ENCODE measurements at regions of chr11 and their contacts with region 1.

Region 1: GRCh38 chr11:2151500-2152257 is 9.3 kb downstream of the INS start:
- DNase-seq: peak; percentile 90 to 92
- H3K4me3 ChIP-seq: no peak overlapping the region
- H3K4me3 Mint-ChIP-seq: peak overlapping the region; percentile 33
- H3K27ac Mint-ChIP-seq: peak overlapping the region; percentile 65
- H3K4me1 ChIP-seq: no peaks in the 10 kb centered on the region; the same call in 1 of the 2 replicates
- H3K4me1 Mint-ChIP-seq: no peaks in the 10 kb centered on the region
- H3K27me3 ChIP-seq: no peaks in the 10 kb centered on the region
- H3K27me3 Mint-ChIP-seq: no peaks in the 10 kb centered on the region
- CTCF ChIP-seq: peak; percentile 93 to 97

Region 2: DNA sequence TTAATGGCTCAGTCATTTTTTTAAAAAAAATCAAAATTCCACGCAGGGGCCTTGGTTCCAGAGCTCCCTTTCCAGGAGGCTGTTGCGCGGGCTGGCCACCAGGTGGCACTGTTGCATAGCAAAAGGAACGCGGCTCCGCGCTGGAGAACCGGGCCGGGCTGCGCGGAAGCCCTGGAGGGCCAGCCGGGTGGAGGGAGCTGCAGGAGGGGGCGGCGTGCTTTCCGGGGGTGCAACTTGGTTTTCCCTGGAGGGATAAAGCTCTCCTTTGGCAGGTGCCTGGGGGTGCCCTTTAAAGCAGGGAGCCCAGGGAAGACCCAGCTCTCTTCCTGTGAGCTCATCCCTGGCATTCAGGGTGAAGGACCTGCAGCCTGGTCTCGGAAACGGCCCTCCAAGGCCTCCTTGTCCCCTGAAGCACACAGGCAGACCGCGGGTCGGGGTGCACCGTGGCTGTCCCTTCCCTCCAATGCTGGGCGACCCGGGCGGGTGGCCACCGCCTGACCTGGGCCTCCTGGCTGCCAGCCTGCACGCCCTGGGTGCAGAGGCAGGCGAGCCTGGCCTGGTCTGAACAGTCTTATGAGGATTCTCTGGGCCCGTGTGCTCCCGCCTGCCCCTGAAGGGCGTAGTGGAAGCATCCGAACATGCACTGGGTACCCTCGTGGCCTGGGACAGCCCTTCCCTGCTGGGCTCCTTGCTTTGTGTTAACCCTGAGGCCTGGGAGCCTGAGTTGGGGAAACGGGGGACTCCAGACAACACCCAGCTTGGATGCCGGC is 498.7 kb before region 1 on chr11:
- CTCF ChIA-PET with region 1: interaction called, 188 read pairs
- POLR2A ChIA-PET with region 1: no interaction called
- intact Hi-C with region 1: loop called (anchors 1 kb)
- DNase-seq: peak; percentile 74 to 91
- H3K4me3 ChIP-seq: no peak overlapping the region
- H3K4me3 Mint-ChIP-seq: no peak overlapping the region
- H3K27ac Mint-ChIP-seq: peak overlapping the region; percentile 42
- H3K4me1 ChIP-seq: peaks cover 37% of the 10 kb centered on the region
- H3K4me1 Mint-ChIP-seq: peaks cover 17% of the 10 kb centered on the region
- H3K27me3 ChIP-seq: no peaks in the 10 kb centered on the region
- H3K27me3 Mint-ChIP-seq: no peaks in the 10 kb centered on the region
- CTCF ChIP-seq: peak; percentile 93 to 97

Region 3: DNA sequence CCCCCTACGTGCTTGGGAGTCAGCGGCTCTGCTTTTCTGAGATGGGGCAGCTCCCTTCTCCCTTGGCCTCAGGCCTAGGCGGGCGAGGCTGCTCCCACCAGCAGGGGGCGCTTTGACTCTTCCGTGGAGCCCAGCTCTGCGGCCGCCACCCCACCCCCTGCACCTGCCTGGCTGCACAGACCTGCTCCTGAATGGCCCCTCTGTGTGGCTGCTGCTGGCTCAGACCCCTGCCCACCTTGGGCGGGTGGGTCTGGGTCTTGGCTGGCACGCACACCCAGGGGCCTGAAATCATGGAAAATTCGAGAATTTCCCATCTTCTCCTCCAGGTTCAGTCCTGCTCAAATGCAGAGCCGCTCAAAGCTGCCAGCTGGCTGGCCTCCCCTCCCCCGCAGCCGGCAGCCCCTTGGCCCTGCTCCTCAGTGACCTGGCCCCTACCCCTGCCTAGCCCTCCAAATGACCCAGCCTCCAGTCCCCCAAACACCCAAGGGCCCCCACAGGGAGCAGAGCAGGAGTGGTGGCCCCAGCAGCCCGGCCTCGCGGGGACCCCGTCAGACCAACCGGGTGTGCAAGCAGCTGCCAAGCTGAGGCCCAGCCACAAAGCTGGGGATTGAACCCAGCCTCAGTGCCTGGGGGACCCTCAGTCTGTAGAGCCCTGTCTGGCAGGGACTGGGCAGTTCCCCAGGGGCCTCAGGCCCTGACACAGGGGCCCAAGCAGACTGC is 269.0 kb before region 1 on chr11:
- CTCF ChIA-PET with region 1: interaction called, 140 read pairs
- POLR2A ChIA-PET with region 1: interaction called, 3 read pairs
- intact Hi-C with region 1: loop called (anchors 1 kb)
- DNase-seq: peak; percentile 76 to 87
- H3K4me3 ChIP-seq: no peak overlapping the region
- H3K4me3 Mint-ChIP-seq: no peak overlapping the region
- H3K27ac Mint-ChIP-seq: no peak overlapping the region
- H3K4me1 ChIP-seq: peaks cover 8% of the 10 kb centered on the region
- H3K4me1 Mint-ChIP-seq: no peaks in the 10 kb centered on the region
- H3K27me3 ChIP-seq: no peaks in the 10 kb centered on the region
- H3K27me3 Mint-ChIP-seq: no peaks in the 10 kb centered on the region
- CTCF ChIP-seq: peak; percentile 89 to 95

Region 4: DNA sequence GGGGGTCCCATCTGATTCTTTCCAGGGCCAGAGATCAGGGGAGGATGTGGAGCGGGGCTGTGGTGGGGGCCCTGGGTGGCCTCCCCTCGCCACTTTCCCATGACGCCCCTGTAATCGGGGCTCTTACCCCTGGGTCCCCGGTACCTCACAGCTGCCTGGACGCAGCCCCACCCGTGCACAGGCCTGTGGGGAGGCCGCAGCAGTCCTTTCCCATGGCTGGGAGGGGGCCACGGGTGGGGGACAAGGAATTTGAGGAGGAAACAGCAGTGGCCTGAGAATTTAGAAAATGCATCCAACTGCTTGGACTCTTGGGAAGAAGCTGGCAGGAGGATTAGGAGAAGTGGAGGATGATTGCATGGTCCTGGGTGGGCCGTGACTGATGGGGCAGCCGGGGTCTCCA is 172.1 kb before region 1 on chr11:
- CTCF ChIA-PET with region 1: interaction called, 13 read pairs
- POLR2A ChIA-PET with region 1: no interaction called
- intact Hi-C with region 1: no loop called
- DNase-seq: no peak
- H3K4me3 ChIP-seq: no peak overlapping the region
- H3K4me3 Mint-ChIP-seq: no peak overlapping the region
- H3K27ac Mint-ChIP-seq: no peak overlapping the region
- H3K4me1 ChIP-seq: no peaks in the 10 kb centered on the region
- H3K4me1 Mint-ChIP-seq: no peaks in the 10 kb centered on the region
- H3K27me3 ChIP-seq: no peaks in the 10 kb centered on the region
- H3K27me3 Mint-ChIP-seq: no peaks in the 10 kb centered on the region
- CTCF ChIP-seq: no peak

Region 5: DNA sequence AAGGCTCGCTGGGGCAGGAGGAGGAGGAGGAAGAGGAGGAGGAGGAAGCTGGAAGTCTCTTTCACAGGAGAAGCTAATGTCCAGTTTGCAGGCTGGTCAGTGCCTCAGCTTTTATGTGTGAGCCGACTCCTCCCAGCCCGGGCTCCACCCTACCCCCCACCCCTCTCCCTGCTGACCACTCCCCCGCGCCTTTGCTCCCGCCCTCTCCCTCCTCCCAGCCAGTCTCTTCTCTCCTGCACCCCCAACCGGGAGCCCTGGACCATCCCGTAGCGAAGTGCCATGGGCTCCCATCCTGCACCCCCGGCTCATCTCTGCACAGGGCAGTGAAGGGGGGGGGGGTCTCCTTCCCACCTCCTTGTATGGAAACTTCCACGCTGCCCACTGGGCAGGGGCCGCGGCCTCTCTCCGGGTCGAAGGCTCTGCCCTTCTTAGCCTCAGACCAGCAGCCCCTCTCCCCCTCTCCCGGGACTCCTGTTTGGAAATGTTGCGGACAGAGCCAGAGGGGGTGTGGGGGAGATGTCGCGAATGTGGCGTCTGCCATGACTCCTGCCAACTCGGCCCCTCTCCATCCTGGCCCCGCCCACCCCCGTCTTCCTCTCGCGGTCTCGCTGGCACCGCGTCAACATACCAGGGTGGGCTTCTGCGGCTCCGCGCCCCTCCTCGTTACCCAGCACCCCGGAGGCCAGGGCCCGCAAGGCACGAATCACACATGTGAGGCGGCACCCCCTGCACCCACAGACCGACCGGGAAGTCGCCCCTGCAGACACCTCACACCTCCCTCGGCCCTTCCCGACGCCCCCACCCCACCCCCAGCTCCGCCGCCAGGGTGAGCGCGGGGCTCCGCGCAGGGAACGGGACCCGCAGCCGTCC is 14.2 kb before region 1 on chr11:
- CTCF ChIA-PET with region 1: interaction called, 28 read pairs
- POLR2A ChIA-PET with region 1: interaction called, 5 read pairs
- intact Hi-C with region 1: no loop called
- DNase-seq: peak; percentile 91 to 94
- H3K4me3 ChIP-seq: peak overlapping the region; percentile 78
- H3K4me3 Mint-ChIP-seq: peak overlapping the region; percentile 84
- H3K27ac Mint-ChIP-seq: peak overlapping the region; percentile 30
- H3K4me1 ChIP-seq: peaks cover 19% of the 10 kb centered on the region
- H3K4me1 Mint-ChIP-seq: peaks cover 18% of the 10 kb centered on the region
- H3K27me3 ChIP-seq: no peaks in the 10 kb centered on the region; the same call in 1 of the 2 replicates
- H3K27me3 Mint-ChIP-seq: peaks cover 15% of the 10 kb centered on the region
- CTCF ChIP-seq: peak in 1 of 2 experiments; percentile 0

Region 6: DNA sequence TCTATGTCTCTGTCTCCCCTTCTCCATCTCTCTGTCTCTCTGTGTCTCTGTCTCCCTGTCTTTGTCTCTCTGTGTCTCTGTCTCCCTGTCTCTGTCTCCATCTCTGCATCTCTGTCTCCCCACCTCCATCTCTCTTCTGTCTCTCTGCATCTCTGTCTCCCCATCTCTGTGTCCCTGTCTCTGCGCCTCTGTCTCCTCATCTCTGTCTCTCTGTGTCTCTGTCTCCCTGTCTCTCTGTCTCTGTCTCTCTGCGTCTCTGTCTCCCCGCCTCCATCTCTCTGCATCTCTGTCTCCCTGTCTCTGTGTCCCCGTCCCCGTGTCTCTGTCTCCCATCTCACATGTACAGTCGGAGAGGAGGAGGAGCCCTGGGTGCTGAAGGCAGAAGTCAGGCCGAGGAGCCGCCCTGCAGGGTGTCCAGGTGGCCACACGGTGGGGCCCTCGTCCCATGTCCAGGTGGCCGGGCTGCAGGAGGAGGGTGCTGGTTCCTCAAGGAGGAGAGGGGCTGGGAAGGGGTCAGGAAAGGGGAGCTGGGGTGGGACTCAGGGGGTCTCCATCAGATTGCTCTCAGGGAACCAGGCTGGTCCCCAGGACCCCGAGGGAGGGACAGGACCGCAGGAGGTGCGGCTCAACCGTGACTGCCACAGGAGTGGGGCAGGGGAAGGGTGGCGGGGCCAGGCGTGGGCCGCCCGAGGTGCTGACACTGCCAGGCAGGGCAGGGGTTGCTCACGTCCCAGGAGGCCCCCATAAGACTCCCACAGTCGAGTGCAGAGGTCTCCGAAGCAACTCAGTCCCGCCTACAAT is 45.5 kb after region 1 on chr11:
- CTCF ChIA-PET with region 1: interaction called, 68 read pairs
- POLR2A ChIA-PET with region 1: interaction called, 4 read pairs
- intact Hi-C with region 1: loop called (anchors 1 kb)
- DNase-seq: peak; percentile 92 to 97
- H3K4me3 ChIP-seq: no peak overlapping the region
- H3K4me3 Mint-ChIP-seq: no peak overlapping the region
- H3K27ac Mint-ChIP-seq: peak overlapping the region; percentile 51
- H3K4me1 ChIP-seq: peaks cover 37% of the 10 kb centered on the region
- H3K4me1 Mint-ChIP-seq: peaks cover 31% of the 10 kb centered on the region
- H3K27me3 ChIP-seq: no peaks in the 10 kb centered on the region
- H3K27me3 Mint-ChIP-seq: peaks cover 7% of the 10 kb centered on the region
- CTCF ChIP-seq: peak; percentile 98 to 99

Region 7: DNA sequence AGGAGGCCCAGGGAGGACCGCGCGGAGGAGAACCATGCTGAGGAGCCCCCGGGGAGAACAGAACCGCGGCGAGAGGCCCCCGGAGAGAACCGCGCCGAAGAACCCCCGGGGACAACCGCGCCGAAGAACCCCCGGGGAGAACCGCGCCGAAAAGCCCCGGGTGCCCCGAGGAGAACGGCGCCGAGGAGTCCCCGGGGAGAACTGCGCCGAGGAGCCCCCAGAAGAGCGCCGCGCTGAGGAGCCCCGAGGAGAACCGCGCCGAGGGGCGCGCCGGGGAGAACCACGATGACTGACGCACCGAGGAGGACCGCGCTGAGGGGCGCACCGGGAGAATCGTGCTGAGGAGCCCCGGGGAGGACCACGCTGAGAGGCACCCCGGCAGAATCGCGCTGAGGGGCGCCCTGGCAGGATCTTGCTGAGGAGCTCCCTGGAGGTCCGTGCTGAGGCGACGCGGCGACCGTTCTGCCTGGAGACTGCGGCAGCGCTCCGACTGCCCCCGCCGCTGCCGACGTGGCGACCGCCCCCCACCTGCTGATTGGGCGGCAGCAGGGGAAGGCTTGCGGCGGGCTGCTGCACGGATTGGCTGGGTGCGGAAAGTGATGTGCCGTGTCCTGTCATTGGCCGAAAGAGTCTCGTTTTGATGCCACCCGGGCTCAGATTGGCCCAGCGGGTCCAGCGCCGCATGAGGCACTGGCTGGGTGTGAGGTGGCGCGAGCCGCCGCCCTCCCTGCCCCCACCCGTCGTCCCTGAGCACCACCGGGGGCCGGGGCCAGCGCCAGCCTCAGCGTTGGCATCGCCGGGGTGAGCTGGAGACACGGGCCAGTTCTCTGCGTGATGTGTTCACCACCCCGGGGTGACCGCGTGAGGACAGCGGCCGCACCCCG is 548.1 kb after region 1 on chr11 and contains the start of gene KCNQ1OT1:
- CTCF ChIA-PET with region 1: no interaction called
- POLR2A ChIA-PET with region 1: no interaction called
- intact Hi-C with region 1: no loop called
- DNase-seq: peak; percentile 97
- H3K4me3 ChIP-seq: peak within 1 kb of the TSS; percentile 92
- H3K4me3 Mint-ChIP-seq: peak within 1 kb of the TSS; percentile 84
- H3K27ac Mint-ChIP-seq: peak within 1 kb of the TSS; percentile 90
- H3K4me1 ChIP-seq: peaks cover 30% of the 10 kb centered on the region
- H3K4me1 Mint-ChIP-seq: peaks cover 15% of the 10 kb centered on the region
- H3K27me3 ChIP-seq: no peaks in the 10 kb centered on the region
- H3K27me3 Mint-ChIP-seq: no peaks in the 10 kb centered on the region
- CTCF ChIP-seq: no peak
- total RNA-seq, gene KCNQ1OT1: 7.5 and 8.2 TPM in 2 replicates

Measured in Caco-2 (cell line).